Cardiac septum (tissue), 1 donor: ENCODE measurements at regions of chr5 and their contacts with region 1.

Region 1: GRCh38 chr5:173283318-173284288 is 44.6 kb downstream of the STC2 start:
- DNase-seq: peak; percentile 82

Region 2: GRCh38 chr5:172707285-172708182 is 576.1 kb before region 1 on chr5:
- intact Hi-C with region 1: loop called (anchors 10 kb)
- DNase-seq: no peak

Region 3: DNA sequence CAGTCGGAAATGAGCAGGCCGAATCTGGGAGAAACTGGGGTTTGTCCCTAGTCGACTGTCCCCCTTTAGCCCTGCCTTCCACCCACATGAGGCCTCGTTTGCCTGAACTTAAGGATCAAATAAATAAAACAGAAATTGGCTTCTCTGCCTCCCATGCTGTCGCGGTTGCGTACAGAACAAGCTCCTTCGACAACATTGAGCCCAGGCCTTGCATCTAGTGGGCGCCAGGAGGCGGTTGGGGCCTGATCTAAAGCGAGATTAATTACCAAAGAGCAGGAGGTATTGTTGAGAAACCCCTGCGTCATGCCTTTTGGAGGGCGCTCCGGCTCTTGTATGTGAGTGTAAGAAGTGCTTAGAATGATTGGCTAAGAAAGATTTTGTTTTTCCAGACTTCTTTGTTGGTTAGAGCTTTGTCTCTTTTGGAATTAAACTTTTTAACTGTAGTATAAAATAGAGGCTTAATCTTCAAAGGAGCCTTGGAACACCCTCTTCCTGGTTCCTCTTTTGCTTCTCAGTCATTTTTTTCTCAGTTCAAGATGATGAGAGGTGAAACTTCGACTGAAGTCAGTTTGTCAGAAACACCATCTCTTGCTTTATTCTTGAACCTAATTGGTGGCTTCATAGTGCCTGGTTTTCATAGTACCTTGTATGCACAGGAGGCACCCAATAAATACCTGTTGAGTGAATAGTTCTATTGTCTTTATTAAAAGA is 299.2 kb before region 1 on chr5:
- intact Hi-C with region 1: loop called (anchors 5 kb)
- DNase-seq: peak; percentile 79

Region 4: DNA sequence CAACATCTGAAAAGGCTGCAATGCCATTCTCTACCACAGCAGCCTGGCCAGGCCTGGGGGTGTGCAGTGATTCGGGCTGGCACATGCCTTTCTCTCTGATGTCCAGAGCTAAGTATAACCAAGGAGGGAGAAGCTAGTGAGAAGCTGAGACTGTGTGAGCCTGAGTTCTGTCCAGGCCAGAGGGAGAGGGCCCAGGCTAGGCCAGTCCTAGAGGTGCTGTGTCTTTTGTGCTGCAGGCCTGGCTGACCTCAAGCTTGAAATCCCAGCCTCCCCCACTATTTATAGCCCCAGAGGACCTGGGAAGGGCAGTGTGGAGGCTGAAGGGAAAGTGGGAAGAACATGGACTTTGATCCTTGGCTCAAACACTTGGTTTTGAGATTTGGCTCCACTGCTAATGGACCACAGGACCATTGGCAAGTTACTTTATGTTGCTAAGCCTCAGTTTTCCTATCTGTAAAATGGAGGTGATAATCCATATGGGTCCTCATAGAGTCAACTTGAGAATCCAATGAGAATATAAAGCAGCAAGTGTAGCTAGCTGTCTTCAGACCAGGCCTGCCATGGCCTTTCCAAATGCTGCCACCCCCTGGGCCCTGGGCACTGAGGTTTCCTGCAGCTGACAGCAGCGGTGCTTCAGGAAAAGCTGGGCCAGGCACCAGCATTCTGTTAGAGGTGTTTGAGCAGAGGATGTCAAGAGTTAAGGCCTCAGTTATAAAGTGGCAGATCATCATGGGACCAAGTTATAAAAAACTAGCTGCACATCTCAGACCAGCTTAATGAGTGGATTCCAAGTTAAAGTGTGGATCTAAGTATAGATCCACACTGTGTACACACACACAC is 118.2 kb before region 1 on chr5:
- intact Hi-C with region 1: loop called (anchors 1 kb)
- DNase-seq: no peak